Activated CD4-positive, alpha-beta memory T cell treated with anti-CD3 and anti-CD28 coated beads for 36 hours (primary cell): ENCODE measurements at regions of chr4 and their contacts with region 1.

Region 1: GRCh38 chr4:99462875-99463464 is 27.8 kb upstream of the ADH7 start:
- DNase-seq: peak; percentile 63
- H3K4me3 Mint-ChIP-seq: no peak overlapping the region
- H3K27ac Mint-ChIP-seq: no peak overlapping the region
- H3K4me1 Mint-ChIP-seq: no peaks in the 10 kb centered on the region
- H3K27me3 Mint-ChIP-seq: peaks cover 5% of the 10 kb centered on the region

Region 2: DNA sequence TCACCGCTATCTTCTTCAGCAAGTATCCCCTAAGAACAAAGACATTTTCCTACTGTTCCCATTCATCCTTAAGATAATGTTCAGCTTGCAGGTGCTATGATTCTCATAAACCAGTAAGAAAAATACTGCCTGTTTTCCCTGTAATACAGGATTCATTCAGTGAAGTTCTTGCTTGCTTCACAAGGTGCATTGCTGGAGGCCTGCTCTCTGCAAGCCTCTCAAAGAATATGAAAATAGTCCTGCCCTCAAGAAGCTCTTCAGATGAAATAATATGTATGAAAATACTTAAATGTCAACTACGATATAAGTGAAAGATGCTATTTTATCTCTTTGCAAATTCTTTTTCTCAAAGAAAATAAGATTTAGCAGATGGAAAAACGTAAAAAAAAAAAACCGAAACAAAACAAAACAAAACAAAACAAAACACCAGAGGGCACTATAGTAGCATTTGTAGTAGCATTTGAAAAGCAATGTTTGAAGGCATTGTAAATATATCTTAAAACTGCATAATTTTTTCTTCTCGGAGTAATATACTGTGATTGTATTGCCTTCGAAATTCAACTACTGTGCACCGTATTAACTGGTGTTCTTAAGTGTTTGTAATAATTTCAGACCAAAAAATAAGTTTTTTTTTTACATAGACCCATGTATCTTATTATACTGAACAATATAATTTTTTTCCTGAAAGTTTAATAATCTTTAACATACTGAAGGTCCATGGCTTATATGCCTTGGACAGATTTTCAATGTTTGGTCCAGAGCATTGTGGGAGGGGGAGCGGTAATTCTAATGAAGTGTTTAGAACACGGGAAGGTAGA is 344.9 kb before region 1 on chr4:
- CTCF ChIA-PET with region 1: interaction called, 9 read pairs
- POLR2A ChIA-PET with region 1: no interaction called
- intact Hi-C with region 1: loop called (anchors 5 kb)
- DNase-seq: no peak
- H3K4me3 Mint-ChIP-seq: no peak overlapping the region
- H3K27ac Mint-ChIP-seq: no peak overlapping the region
- H3K4me1 Mint-ChIP-seq: peaks cover 2% of the 10 kb centered on the region
- H3K27me3 Mint-ChIP-seq: peaks cover 1% of the 10 kb centered on the region

Region 3: DNA sequence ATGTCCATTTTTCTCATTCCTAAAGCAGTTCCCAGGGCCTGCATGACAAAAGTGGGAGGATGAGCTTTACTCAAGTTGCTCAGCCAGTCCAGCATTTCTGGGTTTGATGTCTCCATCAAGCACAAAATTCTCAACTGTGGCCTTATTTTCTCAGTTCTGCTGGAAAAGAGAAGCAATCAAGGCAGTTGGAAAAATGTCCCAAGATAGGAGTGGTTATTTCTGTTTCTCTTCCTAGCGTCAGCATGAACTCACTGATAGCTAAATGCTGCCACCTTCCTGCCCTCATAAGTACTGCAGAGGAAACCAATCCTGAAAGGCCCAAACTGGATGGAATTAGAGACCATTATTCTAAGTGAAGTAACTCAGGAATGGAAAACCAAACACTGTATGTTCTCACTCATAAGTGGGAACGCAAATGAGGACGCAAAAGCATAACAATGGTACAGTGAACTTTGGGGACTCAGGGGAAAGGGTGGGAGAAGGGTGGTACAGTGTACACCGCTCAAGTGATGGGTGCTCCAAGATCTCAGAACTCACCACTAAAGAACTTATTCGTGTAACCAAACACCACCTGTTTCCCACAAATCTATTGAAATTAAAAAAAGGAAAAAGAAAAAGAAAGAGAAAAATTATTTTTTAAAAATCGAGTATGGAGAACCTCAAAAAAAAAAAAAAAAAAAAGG is 57.4 kb before region 1 on chr4:
- CTCF ChIA-PET with region 1: interaction called, 12 read pairs
- POLR2A ChIA-PET with region 1: interaction called, 3 read pairs
- intact Hi-C with region 1: loop called (anchors 1 kb)
- DNase-seq: peak; percentile 66
- H3K4me3 Mint-ChIP-seq: no peak overlapping the region
- H3K27ac Mint-ChIP-seq: no peak overlapping the region
- H3K4me1 Mint-ChIP-seq: peaks cover 18% of the 10 kb centered on the region
- H3K27me3 Mint-ChIP-seq: peaks cover 2% of the 10 kb centered on the region

Region 4: GRCh38 chr4:99473131-99473530 is 10.2 kb after region 1 on chr4:
- CTCF ChIA-PET with region 1: interaction called, 14 read pairs
- POLR2A ChIA-PET with region 1: no interaction called
- intact Hi-C with region 1: no loop called
- DNase-seq: no peak
- H3K4me3 Mint-ChIP-seq: no peak overlapping the region
- H3K27ac Mint-ChIP-seq: no peak overlapping the region
- H3K4me1 Mint-ChIP-seq: no peaks in the 10 kb centered on the region
- H3K27me3 Mint-ChIP-seq: peaks cover 3% of the 10 kb centered on the region

Region 5: GRCh38 chr4:99593781-99594636 is 131.0 kb after region 1 on chr4:
- CTCF ChIA-PET with region 1: no interaction called
- POLR2A ChIA-PET with region 1: no interaction called
- intact Hi-C with region 1: no loop called
- DNase-seq: no peak
- H3K4me3 Mint-ChIP-seq: no peak overlapping the region
- H3K27ac Mint-ChIP-seq: no peak overlapping the region
- H3K4me1 Mint-ChIP-seq: no peaks in the 10 kb centered on the region
- H3K27me3 Mint-ChIP-seq: no peaks in the 10 kb centered on the region